ENCODE measurements at regions of chr7 and their contacts with region 1.

Region 1: DNA sequence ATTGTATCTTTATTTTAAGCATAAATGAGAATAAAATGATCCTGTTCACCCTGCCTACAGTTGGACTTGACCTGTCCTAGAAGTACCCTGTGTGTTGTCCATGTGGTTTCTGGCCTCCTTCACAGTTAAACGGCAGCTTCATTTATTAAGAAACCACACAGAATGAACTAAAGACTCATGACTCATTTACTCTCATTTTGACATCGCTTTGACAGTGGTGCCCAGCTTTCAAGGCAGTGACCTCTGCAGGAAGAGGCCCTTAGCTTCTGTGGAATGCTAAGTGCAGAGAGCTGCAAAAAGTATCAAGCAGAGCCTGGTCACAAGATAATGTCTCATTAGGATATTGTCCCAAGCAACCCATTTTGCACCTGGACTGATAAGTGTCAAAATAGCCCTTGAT is 93.4 kb downstream of the AVL9 start:
- DNase-seq: no peak
- ATAC-seq: peak; percentile 55 to 62

Region 2: GRCh38 chr7:32102432-32102873 is 486.2 kb before region 1 on chr7:
- intact Hi-C with region 1: loop called in 1 of 2 experiments (anchors 10 kb)
- DNase-seq: peak; percentile 45
- ATAC-seq: peak in 1 of 2 donors; percentile 59

Region 3: DNA sequence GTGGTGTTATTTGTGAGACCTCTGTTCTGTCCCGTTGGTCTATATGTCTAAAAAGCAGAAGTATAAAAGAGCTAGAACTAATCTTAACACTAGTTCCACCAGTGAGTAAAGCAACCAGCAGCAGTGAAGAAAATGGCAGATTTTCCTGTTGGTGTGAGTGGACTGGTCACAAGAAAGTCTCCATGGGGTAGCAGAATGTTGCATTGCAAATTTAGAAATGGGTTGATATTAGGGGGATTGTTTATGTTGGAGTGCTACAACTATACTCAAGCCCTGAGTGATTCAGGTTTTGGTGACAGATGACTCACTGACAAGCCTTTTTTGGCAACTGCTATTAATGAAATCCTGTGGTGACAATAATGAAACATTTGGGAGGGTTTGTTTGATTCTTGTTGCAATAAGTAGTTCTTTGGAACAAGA is 87.7 kb before region 1 on chr7:
- intact Hi-C with region 1: loop called in 1 of 2 experiments (anchors 10 kb)
- DNase-seq: no peak
- ATAC-seq: peak; percentile 34 to 60

Measured in left cardiac atrium (tissue), 4 donors.